Activated T-helper 1 cell treated with anti-CD3 and anti-CD28 coated beads, Interleukin-12 subunit alpha, Interleukin-12 subunit beta, Interleukin-2, Interleukin-4 antibody, amounts not matched to agents 30 ng/mL and 10 ng/mL and 1 ng/mL, durations not matched to agents 14 hours and 24 hours and 36 hours (primary cell): ENCODE measurements at regions of chrX and their contacts with region 1.

Region 1: DNA sequence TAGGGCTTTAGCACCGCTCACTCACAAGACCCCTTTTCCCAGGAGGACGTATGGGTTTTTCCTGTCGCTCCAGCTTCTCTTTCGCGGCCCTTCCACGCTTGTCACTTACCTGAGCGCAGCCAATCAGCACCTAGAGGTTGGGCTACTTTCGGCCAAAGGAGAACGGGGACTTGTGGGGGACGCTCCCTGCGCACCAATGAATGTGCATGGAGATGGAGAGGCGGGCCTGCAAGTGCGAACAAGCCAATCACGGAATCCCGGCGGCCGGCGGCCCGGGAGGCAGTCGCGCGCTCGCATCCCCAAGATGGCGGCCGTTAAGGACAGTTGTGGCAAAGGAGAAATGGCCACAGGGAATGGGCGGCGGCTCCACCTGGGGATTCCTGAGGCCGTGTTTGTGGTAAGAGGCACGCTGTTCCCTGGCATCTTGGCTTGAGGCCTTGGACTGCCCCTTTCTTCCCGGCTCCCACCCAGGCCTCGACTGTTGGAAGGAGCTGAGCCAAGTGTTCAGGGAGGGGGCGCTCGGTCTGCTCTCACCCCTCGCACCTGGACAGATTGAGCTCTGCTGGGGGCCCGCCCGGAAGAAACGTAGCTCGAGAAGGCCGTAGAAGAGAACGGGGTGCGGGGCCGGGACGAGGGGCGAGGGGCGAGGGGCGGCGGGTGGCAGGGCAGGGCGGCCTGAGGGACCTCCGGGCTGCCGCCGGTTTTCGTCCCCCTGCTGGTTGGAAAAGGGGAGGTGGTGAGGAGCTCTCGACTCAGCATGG is at the start of gene VBP1:
- DNase-seq: peak; percentile 84
- H3K4me3 Mint-ChIP-seq: peak within 1 kb of the TSS; percentile 96
- H3K27ac Mint-ChIP-seq: peak within 1 kb of the TSS; percentile 93
- H3K4me1 Mint-ChIP-seq: peaks cover 20% of the 10 kb centered on the region
- H3K27me3 Mint-ChIP-seq: no peaks in the 10 kb centered on the region
- total RNA-seq, gene VBP1: 73.0 and 74.6 TPM in 2 replicates

Region 2: GRCh38 chrX:154918060-154918483 is 298.3 kb before region 1 on chrX:
- intact Hi-C with region 1: loop called (anchors 2 kb)
- DNase-seq: peak; percentile 1
- H3K4me3 Mint-ChIP-seq: peak overlapping the region; percentile 68
- H3K27ac Mint-ChIP-seq: no peak overlapping the region
- H3K4me1 Mint-ChIP-seq: peaks cover 6% of the 10 kb centered on the region
- H3K27me3 Mint-ChIP-seq: peaks cover 15% of the 10 kb centered on the region

Region 3: DNA sequence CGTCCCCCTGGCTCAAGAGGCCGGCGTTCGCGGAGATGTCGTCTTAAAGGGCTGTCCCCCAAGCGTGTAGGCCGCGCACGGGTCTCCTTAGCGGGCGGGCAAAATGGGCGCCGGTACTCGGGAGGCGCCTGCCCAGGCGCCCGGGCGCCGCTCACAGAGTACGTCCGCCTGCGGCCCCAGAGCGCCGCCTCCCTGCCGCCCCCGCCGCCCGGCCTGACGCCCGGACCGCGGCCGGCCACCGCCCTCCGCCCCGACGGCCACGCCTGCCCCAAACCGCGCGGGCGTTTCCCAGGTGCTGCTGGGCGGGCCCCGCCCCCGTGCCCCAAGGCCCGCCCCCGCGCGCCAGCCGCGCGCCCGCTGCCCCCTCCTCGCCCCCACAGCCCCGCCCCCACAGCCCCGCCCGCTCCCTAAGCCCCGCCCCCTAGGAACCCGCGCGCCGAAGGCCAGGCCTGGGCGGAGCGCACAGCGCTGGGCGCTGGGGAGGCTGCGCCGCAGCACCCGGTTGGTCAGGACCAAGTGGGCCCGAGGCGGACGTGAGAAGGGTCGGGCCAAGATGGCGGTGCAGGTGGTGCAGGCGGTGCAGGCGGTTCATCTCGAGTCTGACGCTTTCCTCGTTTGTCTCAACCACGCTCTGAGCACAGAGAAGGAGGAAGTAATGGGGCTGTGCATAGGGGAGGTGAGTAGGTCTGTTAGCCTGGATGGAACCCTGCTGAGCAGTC is 145.2 kb before region 1 on chrX and contains the starts of genes BRCC3, CMC4 and MTCP1:
- intact Hi-C with region 1: loop called (anchors 2 kb)
- DNase-seq: peak; percentile 72
- H3K4me3 Mint-ChIP-seq: peak within 1 kb of the TSS; percentile 95
- H3K27ac Mint-ChIP-seq: peak within 1 kb of the TSS; percentile 93
- H3K4me1 Mint-ChIP-seq: peaks cover 50% of the 10 kb centered on the region
- H3K27me3 Mint-ChIP-seq: no peaks in the 10 kb centered on the region
- total RNA-seq, gene BRCC3: 28.9 and 30.5 TPM in 2 replicates
- total RNA-seq, gene CMC4: 1.3 and 3.0 TPM in 2 replicates
- total RNA-seq, gene MTCP1: 9.1 and 12.7 TPM in 2 replicates

Region 4: DNA sequence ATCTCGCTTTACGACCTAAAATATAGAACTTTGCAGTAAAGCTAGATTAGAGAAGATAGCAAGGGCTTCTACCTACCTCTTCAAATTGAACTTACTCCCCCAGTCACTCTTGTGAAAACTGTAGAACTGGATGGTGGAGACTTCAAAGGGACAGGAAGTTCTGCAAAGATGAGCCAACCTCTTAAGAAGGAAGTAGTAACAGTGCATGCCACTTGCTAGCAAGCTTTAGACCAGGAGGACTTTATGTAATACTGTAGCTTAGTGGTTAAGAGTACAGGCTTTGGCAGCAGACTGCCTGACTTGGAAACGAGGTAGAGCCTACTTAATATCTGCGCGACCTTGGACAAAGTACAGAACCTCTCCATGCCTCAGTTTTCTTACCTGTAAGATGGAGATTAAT is 27.6 kb before region 1 on chrX:
- intact Hi-C with region 1: loop called (anchors 2 kb)
- DNase-seq: peak; percentile 1
- H3K4me3 Mint-ChIP-seq: peak overlapping the region; percentile 7
- H3K27ac Mint-ChIP-seq: peak overlapping the region; percentile 23
- H3K4me1 Mint-ChIP-seq: peaks cover 16% of the 10 kb centered on the region
- H3K27me3 Mint-ChIP-seq: no peaks in the 10 kb centered on the region

Region 5: DNA sequence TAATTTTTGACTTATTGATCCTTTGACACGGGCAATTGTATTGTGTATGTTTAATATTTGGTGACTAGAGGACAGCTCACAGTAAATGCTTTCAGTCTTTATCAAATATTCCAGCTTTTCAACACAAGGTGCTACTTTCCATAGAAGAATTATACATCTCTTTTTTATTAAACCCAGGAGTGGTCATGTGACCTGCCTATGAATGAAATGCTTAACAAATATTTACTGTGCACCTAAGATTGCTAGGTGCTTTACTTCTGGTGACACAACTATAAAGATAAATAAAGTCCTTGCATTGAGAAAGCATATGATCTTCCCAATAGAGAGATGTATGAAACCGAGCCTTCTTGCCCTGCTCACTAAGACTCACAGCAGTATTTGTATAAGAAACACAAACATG is 183.2 kb after region 1 on chrX:
- intact Hi-C with region 1: no loop called
- DNase-seq: no peak
- H3K4me3 Mint-ChIP-seq: no peak overlapping the region
- H3K27ac Mint-ChIP-seq: no peak overlapping the region
- H3K4me1 Mint-ChIP-seq: peaks cover 4% of the 10 kb centered on the region
- H3K27me3 Mint-ChIP-seq: no peaks in the 10 kb centered on the region

Region 6: DNA sequence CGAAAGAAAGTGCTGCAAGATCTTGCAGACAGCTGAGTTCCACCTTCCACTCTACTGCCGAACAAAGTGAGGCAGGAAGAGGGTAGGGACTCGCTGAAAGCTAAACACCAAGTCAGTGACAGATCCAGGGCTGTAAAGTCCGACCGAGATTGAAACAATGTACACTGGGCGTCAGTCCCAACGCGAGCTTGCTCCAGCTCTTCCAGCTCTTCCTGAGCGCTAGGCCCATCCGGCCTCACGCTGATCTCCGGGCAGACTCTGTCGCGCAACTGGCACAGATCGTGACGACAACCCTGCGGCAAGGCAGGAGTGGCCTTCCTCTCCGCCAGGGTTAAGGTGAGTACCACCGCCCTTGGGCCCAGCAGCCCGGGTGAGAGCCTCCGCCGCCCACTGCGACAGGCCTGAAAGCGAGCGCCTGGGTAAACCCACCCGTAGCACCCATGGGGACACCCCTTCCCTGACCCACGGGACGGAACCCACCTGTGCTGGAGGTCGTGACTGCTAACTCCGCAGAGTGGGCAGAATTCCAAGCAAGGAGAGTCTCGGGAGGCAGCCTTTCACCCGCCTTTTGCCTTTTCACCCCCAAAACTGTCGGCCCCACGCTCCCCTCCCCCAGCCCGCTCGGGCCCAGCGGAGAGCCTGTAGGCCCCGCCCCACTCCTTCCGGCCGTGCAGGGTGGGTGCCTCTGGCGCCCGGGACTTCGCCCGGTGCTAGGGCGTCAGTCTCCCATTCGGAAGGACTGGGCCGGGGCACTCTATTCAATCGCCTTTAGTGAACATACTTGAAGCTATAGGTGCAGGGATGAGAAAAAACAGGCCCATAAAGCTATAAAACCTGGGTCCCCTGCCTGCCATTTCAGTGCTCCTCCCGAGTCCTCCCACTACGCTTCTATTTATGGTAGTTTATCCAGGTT is 396.2 kb after region 1 on chrX and contains the start of gene TMLHE:
- intact Hi-C with region 1: loop called (anchors 5 kb)
- DNase-seq: peak; percentile 42
- H3K4me3 Mint-ChIP-seq: peak within 1 kb of the TSS; percentile 92
- H3K27ac Mint-ChIP-seq: peak within 1 kb of the TSS; percentile 92
- H3K4me1 Mint-ChIP-seq: peaks cover 5% of the 10 kb centered on the region
- H3K27me3 Mint-ChIP-seq: no peaks in the 10 kb centered on the region
- total RNA-seq, gene TMLHE: 7.3 and 9.9 TPM in 2 replicates